WTC11 (cell line): ENCODE measurements at regions of chr19 and their contacts with region 1.

Region 1: DNA sequence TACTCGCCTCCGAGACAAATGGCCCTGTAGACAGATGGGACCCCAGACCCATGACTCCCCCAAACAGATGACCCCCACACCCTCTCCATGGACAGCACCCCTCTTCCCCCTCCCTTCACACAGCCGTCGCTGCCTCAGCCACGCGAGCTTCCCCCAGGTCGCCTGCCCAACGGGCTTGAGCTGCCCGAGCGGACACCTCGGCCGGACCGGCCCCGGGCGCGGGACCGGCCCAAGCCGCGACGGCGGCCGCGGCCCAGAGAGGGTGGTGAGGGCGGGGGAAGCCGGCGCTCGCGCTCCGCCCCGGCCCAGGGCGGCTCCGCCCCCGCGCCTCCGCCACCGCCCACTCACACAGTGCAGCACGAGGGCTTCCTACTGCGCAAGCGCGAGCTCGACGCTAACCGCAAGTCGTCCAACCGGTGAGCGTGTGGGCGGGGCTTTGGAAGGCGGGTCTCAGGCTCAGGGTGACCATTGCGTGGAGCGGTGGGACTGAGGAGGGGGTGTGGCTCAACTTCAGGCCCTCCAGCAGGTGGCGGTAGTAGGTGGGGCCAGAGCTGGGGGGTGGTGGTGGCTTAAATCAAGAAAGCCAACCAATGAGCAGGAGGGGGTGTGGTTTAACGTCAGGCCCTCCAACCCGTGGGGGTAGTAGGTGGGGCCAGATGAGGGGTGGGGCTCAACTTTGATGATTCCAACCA is 6.2 kb upstream of the SHKBP1 start:
- DNase-seq: peak; percentile 100
- ATAC-seq: peak; percentile 96
- H3K4me3 Mint-ChIP-seq: peak overlapping the region; percentile 75
- H3K27ac Mint-ChIP-seq: no peak overlapping the region; the same call in 1 of the 2 replicates
- H3K4me1 Mint-ChIP-seq: peaks cover 15% of the 10 kb centered on the region
- H3K27me3 Mint-ChIP-seq: peaks cover 78% of the 10 kb centered on the region
- CTCF ChIP-seq: no peak

Region 2: DNA sequence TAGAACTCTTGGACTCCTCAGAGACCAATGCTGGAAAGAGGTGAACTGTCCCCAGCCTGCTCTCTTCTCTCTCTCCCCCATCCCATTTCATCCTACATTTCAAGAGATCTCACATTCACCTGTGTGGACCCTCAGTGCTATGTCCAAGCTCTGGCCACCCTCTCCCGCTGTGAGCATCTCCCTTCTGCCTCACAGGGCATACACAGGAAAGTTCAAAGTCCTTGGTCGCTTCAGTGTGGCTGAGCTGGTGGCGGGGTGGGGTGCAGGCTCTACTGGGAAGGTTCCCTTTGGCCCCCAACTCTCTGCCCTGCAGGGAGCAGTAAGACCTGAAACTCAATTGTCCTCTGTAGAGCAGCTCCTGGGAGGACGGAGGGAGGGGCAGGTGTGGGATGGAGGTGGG is 76.7 kb before region 1 on chr19:
- CTCF ChIA-PET with region 1: no interaction called
- POLR2A ChIA-PET with region 1: no interaction called
- DNase-seq: no peak
- ATAC-seq: no peak
- H3K4me3 Mint-ChIP-seq: no peak overlapping the region
- H3K27ac Mint-ChIP-seq: no peak overlapping the region
- H3K4me1 Mint-ChIP-seq: no peaks in the 10 kb centered on the region
- H3K27me3 Mint-ChIP-seq: peaks cover 48% of the 10 kb centered on the region
- CTCF ChIP-seq: no peak

Region 3: GRCh38 chr19:40553885-40554857 is 16.3 kb before region 1 on chr19:
- CTCF ChIA-PET with region 1: interaction called, 35 read pairs
- POLR2A ChIA-PET with region 1: interaction called, 3 read pairs
- DNase-seq: peak; percentile 72
- ATAC-seq: peak; percentile 86
- H3K4me3 Mint-ChIP-seq: peak overlapping the region; percentile 60
- H3K27ac Mint-ChIP-seq: no peak overlapping the region
- H3K4me1 Mint-ChIP-seq: peaks cover 13% of the 10 kb centered on the region
- H3K27me3 Mint-ChIP-seq: peaks cover 91% of the 10 kb centered on the region
- CTCF ChIP-seq: no peak